ENCODE measurements at regions of chr6 and their contacts with region 1.

Region 1: DNA sequence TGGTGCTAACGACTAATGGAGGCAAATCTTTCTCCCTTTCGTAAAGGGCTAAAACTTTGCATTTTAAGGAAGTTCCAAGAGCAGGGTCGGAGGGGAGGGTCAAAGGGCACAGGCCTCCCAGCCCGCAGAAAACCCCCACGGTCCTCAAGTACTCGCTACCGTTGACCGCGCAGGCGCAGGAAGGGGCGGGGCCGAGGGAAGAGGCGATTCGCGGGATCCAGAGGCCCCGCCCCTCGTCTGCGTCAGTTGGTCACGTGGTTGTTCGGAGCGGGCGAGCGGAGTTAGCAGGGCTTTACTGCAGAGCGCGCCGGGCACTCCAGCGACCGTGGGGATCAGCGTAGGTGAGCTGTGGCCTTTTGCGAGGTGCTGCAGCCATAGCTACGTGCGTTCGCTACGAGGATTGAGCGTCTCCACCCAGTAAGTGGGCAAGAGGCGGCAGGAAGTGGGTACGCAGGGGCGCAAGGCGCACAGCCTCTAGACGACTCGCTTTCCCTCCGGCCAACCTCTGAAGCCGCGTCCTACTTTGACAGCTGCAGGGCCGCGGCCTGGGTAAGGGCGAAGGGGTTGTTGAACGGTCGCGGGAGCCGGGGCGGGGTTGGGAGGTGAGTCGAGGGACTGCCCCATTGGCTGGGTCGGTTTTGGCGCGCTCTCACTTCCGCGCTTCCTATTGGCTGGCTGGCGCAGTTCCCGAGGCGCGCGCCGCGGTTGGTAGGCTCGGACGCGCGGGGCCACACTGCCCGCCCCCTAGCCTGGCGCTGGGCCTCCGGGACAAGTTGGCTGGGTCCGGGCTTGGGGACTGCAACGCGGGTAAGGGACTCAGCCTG is at the start of gene GMNN:
- DNase-seq: peak; percentile 96 to 99 (median 98)
- H3K4me3 ChIP-seq: peak within 1 kb of the TSS; percentile 74 to 100 (median 98)
- H3K27ac ChIP-seq: peak within 1 kb of the TSS; percentile 73 to 99 (median 96)
- H3K27me3 ChIP-seq: no peaks in the 10 kb centered on the region
- CTCF ChIP-seq: peak in 24 of 56 donors; percentile 7 to 38 (median 22)
- total RNA-seq, gene GMNN: 7.1 to 41.6 (median 15.2) TPM

Region 2: DNA sequence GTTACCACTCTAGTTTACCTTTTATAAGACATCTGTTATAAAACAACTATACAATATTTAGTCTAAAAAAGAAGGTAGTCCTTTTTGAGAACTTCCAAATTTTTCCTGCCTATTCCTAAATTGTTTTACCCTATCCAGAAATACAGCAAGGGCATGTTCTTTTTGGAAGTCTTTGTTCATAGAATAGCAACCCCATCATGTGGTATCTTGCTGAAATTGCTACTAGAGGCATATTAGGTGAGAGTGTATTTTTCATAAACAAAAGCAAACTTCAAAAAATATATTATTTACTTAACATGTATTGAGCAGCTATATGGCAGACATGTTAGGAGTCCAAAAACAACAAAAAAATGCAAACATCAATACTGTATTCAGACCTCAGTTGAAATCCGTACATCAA is 1020.7 kb before region 1 on chr6:
- intact Hi-C with region 1: no loop called
- DNase-seq: no peak
- H3K4me3 ChIP-seq: no peak overlapping the region
- H3K27ac ChIP-seq: no peak overlapping the region
- H3K27me3 ChIP-seq: no peaks in the 10 kb centered on the region
- CTCF ChIP-seq: no peak

Region 3: DNA sequence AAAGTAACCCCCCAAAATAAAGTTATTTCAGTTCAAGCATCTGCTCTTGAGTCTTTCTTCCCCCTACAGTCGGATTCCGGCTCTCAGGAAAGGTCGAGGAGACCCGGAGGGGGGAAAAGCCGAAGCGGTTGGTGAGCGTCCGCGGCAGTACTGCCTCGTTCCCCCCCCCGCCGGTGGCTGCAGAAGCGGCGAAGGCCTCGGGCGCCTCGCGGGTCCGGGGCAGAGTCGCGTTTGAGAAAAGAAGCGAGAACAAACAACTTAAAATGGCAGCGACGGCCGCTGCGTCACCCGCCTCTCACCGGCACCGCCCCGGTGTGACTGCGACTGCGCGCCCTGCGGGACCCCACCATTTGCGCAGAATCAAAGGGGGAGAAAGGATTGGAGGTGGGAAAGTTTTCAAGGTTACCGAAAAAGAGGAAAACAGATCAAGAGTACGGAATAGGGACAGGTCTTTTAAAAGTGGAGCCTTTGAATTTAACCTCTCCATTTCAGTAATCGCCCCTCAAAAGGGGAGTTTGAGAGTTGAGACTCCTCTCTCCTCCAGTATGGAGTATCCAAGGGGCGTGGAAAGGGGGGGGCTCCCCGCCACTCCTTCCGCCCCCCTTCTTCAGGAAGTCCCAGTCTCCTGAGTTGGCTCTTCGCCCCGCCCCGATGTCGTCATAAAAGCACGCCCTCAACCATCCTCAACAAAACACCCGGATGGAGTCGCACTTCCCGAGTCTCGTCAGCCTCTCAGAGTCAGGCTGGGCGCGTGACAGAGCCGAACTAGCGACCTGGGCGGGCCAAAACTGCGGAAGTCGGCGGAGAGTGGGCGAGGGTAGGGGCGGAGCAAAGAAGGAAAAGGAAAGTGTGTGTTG is 54.1 kb before region 1 on chr6:
- intact Hi-C with region 1: loop called (anchors 1 to 2 kb)
- DNase-seq: peak; percentile 99 to 100 (median 99)
- H3K4me3 ChIP-seq: peak overlapping the region; percentile 63 to 100 (median 95)
- H3K27ac ChIP-seq: peak overlapping the region; percentile 83 to 100 (median 99)
- H3K27me3 ChIP-seq: no peaks in the 10 kb centered on the region
- CTCF ChIP-seq: peak in 22 of 56 donors; percentile 6 to 35 (median 14)